ENCODE measurements at regions of chr7 and their contacts with region 1.

Region 1: GRCh38 chr7:29105752-29106668 is 40.3 kb downstream of the CPVL start:
- DNase-seq: peak; percentile 61
- H3K4me3 ChIP-seq: no peak overlapping the region
- H3K27ac ChIP-seq: no peak overlapping the region
- H3K4me1 ChIP-seq: no peaks in the 10 kb centered on the region
- H3K27me3 ChIP-seq: no peaks in the 10 kb centered on the region
- CTCF ChIP-seq: peak; percentile 37 to 82 (median 74)
- POLR2A ChIP-seq: no peak

Region 2: DNA sequence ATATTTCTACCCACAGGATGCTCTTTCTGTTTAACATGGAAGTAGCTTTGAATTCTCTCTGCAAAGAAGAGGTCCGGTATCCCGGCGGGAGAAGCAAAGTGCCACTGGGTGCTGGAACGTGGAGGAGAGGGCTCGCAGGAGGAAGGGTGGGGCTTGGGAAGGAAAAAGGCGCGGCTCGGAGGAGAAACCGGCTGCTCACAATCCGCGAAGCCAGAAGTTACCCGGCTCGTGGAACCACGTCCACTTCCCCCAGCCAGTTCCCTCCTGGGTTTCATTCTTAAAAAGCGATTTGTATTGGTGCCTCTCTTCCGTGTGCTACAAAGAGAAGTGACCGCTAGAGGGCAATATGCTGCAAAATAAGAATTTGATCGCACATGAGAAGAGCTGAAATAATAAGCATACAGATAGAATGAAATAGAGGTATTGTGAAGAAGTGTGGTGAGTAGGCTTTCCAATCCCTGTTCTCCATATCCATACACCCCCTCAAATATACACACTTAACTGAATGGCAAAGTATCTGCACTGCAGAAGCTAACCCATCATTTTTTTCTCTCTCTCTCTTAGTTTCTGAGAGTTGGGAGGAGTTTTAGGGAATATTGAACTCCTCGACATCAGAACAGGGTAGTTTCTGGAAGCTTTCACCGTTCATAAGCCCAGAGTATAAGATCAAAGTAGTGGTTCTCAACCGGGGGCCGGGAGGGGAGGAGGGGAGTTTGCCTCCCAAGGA is 179.0 kb before region 1 on chr7:
- intact Hi-C with region 1: loop called (anchors 2 kb)
- DNase-seq: peak; percentile 82
- H3K4me3 ChIP-seq: peak overlapping the region; percentile 25 to 34
- H3K27ac ChIP-seq: peak overlapping the region in 1 of 2 donors; percentile 23
- H3K4me1 ChIP-seq: peaks cover 4% of the 10 kb centered on the region
- H3K27me3 ChIP-seq: no peaks in the 10 kb centered on the region
- CTCF ChIP-seq: peak; percentile 64 to 86 (median 82)
- POLR2A ChIP-seq: no peak

Region 3: DNA sequence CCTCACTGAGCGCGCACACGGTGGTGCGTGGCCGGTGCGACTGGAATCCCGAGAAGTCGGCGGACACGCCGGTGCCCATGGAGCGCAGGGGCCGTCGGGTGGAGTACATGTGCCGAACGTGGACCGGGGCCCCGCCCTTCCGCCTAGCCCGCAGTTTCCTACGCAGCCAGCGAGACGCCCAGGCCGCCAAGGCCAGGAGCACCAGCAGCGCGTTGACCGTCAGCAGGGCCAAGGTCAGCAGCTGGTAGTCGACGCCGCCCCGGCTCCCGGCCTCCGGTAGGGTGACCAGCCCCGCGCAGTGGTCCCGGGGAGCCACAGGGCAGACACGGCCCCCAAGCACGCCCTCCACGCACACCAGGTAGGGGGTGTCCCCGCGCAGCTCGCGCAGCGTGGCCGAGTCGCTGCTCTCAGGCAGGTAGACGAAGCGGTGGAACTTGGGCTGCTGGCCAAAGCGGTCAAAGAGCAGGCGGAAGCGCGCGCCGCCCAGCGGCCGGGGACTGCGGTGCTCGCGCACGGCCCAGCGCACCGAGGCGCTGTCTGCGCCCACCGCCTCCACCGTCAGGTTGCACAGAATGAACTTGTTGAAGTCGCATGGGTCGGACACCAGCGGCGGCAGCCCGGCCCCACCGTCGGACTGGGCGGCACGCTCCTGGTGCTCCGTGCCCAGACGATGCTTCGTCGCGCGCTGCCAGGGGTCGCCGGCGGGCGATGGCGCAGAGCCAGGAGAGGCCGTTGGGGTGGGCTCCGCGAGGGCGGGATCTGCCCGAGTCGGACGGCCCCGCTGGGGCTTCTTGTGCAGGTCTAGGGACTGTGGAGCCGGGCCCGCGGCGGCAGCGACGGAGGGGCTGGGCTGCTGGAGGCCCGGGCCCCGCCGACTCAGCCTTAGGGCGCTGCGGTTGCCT is 150.0 kb before region 1 on chr7:
- intact Hi-C with region 1: loop called (anchors 2 kb)
- DNase-seq: peak; percentile 76
- H3K4me3 ChIP-seq: peak overlapping the region; percentile 36 to 48
- H3K27ac ChIP-seq: peak overlapping the region; percentile 35 to 39
- H3K4me1 ChIP-seq: no peaks in the 10 kb centered on the region
- H3K27me3 ChIP-seq: no peaks in the 10 kb centered on the region
- CTCF ChIP-seq: peak; percentile 46 to 79 (median 64)
- POLR2A ChIP-seq: no peak

Region 4: GRCh38 chr7:29408841-29409243 is 302.8 kb after region 1 on chr7:
- intact Hi-C with region 1: loop called (anchors 5 kb)
- DNase-seq: peak; percentile 74
- H3K4me3 ChIP-seq: no peak overlapping the region
- H3K27ac ChIP-seq: no peak overlapping the region
- H3K4me1 ChIP-seq: no peaks in the 10 kb centered on the region
- H3K27me3 ChIP-seq: no peaks in the 10 kb centered on the region
- CTCF ChIP-seq: peak; percentile 80 to 94 (median 88)
- POLR2A ChIP-seq: no peak

Measured in prostate gland (tissue), 2 donors.